ENCODE measurements at regions of chr11 and their contacts with region 1.

Region 1: GRCh38 chr11:2549876-2550620 is 105.2 kb downstream of the KCNQ1 start:
- DNase-seq: peak; percentile 18 to 69 (median 67)
- ATAC-seq: peak; percentile 58 to 69
- H3K4me3 ChIP-seq: no peak overlapping the region
- H3K27ac ChIP-seq: no peak overlapping the region
- H3K4me1 ChIP-seq: no peaks in the 10 kb centered on the region
- H3K27me3 ChIP-seq: no peaks in the 10 kb centered on the region

Region 2: DNA sequence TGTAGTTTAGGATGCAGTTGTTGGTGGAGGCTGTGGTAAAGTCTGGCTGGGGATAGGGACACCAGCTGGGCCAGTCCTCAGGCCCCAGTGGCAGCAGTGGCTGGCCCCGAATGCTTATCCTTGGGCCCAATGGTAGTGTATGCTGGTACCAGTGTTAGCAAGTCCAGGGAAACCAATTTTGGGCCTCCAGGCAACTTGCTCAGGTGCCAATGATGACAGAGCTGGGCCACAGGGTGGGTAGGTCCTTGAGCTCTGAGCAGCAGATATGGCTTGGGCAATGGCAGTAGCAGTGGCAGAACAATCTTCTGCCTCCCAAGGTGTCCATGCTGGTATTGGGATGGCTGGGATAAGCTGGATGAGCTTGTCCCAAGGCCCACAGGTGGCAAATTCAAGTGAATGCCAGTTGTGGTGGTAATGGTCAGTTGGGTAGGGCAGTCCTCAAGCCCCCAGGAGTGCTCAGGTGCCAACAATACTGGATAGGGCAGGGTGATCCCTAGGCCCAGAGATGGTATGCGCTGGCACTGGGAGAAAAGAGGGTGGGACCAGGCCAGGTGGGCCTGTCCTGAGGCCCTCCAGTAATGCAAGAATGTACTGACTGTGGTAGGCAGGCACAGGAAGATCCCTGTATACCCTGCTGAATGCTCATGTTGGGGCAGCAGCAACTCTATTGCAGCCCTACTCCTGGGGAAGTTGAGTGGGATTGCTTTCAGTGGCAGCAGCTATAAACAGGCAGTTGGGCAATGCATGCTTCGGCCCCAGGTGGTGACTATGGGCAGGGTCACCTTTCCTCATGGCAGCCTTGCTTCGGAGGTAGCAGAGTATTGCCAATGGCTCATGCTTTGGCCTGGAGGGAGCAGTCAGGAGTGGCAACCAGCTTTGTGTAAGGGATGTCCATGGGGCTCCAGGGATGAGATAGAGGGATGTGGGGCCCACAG is 95.1 kb after region 1 on chr11:
- intact Hi-C with region 1: no loop called
- DNase-seq: peak in 1 of 3 donors; percentile 16
- ATAC-seq: no peak
- H3K4me3 ChIP-seq: no peak overlapping the region
- H3K27ac ChIP-seq: no peak overlapping the region
- H3K4me1 ChIP-seq: no peaks in the 10 kb centered on the region
- H3K27me3 ChIP-seq: no peaks in the 10 kb centered on the region

Region 3: GRCh38 chr11:2778630-2779498 is 228.8 kb after region 1 on chr11:
- intact Hi-C with region 1: loop called in 1 of 4 experiments (anchors 10 kb)
- DNase-seq: peak; percentile 84 to 94 (median 94)
- ATAC-seq: peak; percentile 90 to 91
- H3K4me3 ChIP-seq: no peak overlapping the region
- H3K27ac ChIP-seq: peak overlapping the region; percentile 76
- H3K4me1 ChIP-seq: peaks cover 19% of the 10 kb centered on the region
- H3K27me3 ChIP-seq: no peaks in the 10 kb centered on the region

Measured in right cardiac atrium (tissue), 5 donors.